Cardiac septum (tissue), 1 donor: ENCODE measurements at regions of chr7 and their contacts with region 1.

Region 1: GRCh38 chr7:47266131-47266706 is 315.7 kb downstream of the TNS3 start:
- DNase-seq: no peak

Region 2: DNA sequence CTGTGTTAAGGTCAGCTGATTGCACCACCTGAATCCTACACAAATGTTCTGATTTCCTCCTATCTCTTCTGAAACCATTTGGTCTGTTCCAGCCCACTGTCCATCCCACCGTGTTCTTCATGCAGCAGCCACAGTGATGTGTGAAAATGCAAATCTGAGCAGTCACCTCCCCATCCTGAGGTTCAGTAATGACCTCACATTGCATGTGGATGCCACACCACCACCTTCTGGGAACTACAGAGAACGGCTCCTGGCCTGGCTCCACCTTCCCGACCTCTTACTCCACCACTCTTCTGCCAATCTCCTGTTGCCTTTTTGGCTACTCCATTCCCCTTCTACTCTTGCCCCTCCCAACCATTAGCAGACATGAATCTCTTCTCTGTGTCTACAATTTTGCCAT is 71.3 kb after region 1 on chr7:
- intact Hi-C with region 1: loop called (anchors 5 kb)
- DNase-seq: no peak

Region 3: GRCh38 chr7:47435889-47436312 is 169.7 kb after region 1 on chr7:
- intact Hi-C with region 1: loop called (anchors 5 kb)
- DNase-seq: peak; percentile 77

Region 4: DNA sequence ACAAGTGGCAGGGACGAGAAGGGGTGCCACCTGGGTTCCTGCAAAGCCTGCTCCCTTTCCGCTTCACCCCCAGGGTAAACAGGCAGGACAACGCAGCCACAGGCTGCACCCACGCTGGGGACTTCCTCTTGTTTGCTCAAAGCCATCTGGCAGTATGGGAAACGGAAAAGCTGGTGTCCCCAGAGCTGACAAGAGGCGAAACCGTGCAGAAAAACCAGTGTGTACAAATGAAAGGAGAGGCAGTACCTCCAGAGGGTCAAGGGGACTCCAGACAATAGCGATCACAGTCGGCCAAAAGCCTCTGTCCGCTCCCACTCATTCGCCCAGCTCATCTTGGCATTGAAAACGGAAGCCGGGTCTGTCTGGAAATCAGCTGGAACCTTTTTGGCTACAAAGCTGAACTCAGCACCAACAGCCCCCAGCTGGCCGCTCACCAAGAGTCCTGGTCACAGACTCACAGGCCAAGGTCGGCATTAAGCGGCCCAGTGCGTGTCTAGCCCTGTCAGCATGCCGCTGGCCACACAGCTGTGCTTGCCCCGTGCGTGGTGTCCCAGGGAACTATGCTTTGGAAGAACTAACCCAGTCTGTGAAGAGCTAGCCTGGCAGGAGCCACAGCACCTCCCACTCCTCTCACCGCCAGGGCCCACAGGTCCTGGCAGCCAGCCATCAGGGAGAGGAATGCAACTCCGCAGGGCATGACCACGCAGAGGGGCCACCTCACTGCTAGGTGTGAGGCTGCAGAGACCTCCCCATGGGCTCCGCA is 305.3 kb after region 1 on chr7:
- intact Hi-C with region 1: loop called (anchors 10 kb)
- DNase-seq: peak; percentile 82

Region 5: DNA sequence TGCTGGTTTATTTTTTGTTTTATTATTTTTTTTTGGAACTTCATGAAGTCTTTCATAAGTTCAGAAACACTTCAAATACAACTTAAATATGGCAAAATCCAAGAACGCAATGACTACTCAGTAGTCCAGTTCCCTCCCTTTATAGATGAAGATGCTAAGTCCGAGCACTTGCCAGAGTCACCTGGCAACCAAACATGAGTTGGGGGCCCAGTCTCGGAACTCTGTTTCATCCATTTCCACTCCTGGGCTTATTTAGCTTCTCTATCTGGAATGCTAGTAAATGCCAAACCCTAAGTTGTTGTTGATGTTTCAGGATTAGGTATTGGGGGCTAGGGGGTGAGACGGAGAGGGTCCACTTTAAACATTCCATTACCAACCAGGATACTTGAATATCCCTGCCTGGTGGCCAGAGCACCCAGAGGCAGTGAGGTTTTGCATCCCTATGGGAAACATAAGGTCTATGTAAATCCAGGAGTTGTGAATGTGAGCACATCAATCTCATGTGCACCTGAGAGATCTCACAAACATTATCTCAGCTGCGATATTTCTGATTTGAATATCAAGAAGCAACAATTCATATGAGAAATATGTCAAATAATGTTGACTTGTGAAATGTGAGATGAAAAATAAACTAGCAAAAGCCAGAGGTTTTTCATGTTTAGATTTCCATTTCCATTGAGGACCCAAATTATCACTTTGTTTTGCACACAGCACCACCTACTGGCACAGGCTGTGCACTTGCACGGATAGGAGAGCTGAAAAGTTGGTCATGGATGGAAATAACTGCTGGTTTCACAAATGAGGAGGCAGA is 552.8 kb after region 1 on chr7:
- intact Hi-C with region 1: loop called (anchors 5 kb)
- DNase-seq: no peak